PC-9 (cell line): ENCODE measurements at regions of chr5 and their contacts with region 1.

Region 1: DNA sequence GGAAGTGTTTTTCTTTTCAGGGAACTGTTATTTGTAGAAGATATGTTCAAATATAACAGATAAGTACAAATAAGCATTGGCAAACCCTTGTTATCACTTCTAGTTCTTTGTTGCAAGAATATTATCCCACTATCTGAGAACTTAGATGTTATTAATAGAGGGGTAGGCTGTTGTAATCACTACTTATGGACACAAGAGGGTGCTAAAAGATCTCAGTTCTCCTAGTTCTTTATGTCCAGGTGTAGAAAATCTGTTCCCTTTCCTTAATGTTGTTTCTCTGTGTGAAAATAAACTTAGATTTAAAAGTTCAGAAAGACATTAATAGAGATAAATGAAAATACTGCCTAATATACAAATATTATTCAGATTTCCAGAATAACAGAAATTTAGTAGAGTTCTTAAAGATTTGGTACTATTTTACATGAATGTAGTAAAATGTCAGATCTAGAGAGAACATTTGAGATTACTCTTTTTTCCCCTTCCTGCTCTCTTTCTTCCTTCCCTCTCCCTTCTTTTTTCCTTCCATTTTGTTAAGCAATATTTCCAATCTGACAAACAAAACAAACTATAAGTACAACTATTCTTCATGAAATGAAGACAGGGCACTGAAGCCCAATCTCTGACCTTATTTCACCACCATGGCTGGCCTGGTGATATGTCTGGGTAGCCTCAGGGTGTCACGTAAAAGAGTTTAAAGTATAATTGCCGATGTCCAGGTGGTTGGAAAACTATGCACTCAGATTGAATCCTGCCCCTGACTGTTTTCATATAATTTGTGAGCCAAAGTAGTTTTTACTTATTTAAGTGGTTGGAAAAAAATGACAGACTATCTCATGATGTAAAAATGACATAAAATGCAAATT is 43.6 kb upstream of the C5orf46 start:
- DNase-seq: peak in 1 of 2 experiments; percentile 42
- H3K4me3 ChIP-seq: no peak overlapping the region
- H3K27ac ChIP-seq: no peak overlapping the region
- H3K4me1 ChIP-seq: no peaks in the 10 kb centered on the region
- H3K27me3 ChIP-seq: no peaks in the 10 kb centered on the region
- CTCF ChIP-seq: peak; percentile 83

Region 2: GRCh38 chr5:148011401-148012132 is 61.6 kb after region 1 on chr5:
- CTCF ChIA-PET with region 1: no interaction called
- POLR2A ChIA-PET with region 1: no interaction called
- intact Hi-C with region 1: loop called (anchors 5 kb)
- DNase-seq: peak; percentile 71 to 94
- H3K4me3 ChIP-seq: no peak overlapping the region
- H3K27ac ChIP-seq: no peak overlapping the region
- H3K4me1 ChIP-seq: peaks cover 27% of the 10 kb centered on the region
- H3K27me3 ChIP-seq: peaks cover 17% of the 10 kb centered on the region; the same call in 1 of the 2 replicates
- CTCF ChIP-seq: no peak

Region 3: GRCh38 chr5:148033146-148033545 is 83.2 kb after region 1 on chr5:
- CTCF ChIA-PET with region 1: no interaction called
- POLR2A ChIA-PET with region 1: no interaction called
- intact Hi-C with region 1: no loop called
- DNase-seq: no peak
- H3K4me3 ChIP-seq: no peak overlapping the region
- H3K27ac ChIP-seq: no peak overlapping the region
- H3K4me1 ChIP-seq: no peaks in the 10 kb centered on the region
- H3K27me3 ChIP-seq: no peaks in the 10 kb centered on the region
- CTCF ChIP-seq: no peak

Region 4: GRCh38 chr5:148107608-148108007 is 157.7 kb after region 1 on chr5:
- CTCF ChIA-PET with region 1: no interaction called
- POLR2A ChIA-PET with region 1: no interaction called
- intact Hi-C with region 1: loop called (anchors 1 kb)
- DNase-seq: no peak
- H3K4me3 ChIP-seq: no peak overlapping the region
- H3K27ac ChIP-seq: no peak overlapping the region
- H3K4me1 ChIP-seq: no peaks in the 10 kb centered on the region
- H3K27me3 ChIP-seq: no peaks in the 10 kb centered on the region
- CTCF ChIP-seq: peak; percentile 41

Region 5: DNA sequence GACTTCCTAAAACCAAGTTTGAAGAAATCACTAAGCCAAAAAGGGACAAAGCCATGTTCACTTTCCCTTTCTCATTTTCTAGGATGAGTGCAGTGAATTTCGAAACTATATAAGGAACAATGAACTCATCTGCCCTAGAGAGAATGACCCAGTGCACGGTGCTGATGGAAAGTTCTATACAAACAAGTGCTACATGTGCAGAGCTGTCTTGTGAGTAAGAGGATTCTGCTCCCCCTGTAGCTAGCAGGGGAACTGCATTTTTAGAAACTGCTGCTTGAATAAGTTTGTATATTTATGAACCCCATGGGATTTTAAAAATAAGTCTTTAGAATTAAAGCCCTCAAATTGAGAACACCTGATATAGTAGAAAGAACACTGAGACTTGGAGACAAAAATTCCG is 175.7 kb after region 1 on chr5:
- CTCF ChIA-PET with region 1: no interaction called
- POLR2A ChIA-PET with region 1: no interaction called
- intact Hi-C with region 1: loop called (anchors 1 kb)
- DNase-seq: no peak
- H3K4me3 ChIP-seq: no peak overlapping the region
- H3K27ac ChIP-seq: no peak overlapping the region
- H3K4me1 ChIP-seq: no peaks in the 10 kb centered on the region
- H3K27me3 ChIP-seq: no peaks in the 10 kb centered on the region
- CTCF ChIP-seq: no peak; the same call in 1 of the 2 replicates

Region 6: GRCh38 chr5:148179234-148179824 is 229.4 kb after region 1 on chr5:
- CTCF ChIA-PET with region 1: interaction called, 3 read pairs
- POLR2A ChIA-PET with region 1: no interaction called
- intact Hi-C with region 1: loop called (anchors 2 kb)
- DNase-seq: peak; percentile 6 to 63
- H3K4me3 ChIP-seq: no peak overlapping the region
- H3K27ac ChIP-seq: no peak overlapping the region
- H3K4me1 ChIP-seq: no peaks in the 10 kb centered on the region
- H3K27me3 ChIP-seq: no peaks in the 10 kb centered on the region
- CTCF ChIP-seq: peak; percentile 84

Region 7: DNA sequence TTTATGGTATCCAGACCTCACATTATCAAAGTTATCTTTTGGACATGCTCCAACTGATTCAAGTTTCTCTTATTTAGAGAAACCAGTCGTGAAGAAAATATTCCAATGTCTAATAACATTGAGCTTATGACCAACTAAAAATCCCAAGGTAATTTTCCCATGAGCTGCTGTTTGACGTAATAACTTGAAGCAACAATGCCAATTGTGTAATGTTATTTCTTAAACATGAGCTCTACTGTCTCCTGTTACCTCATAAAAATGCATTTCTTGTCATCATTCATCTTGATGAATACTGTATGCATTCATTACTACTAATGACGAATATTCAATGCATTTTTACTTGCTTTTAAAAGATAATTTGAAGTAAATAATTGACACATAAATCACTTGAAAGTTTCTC is 287.8 kb after region 1 on chr5:
- CTCF ChIA-PET with region 1: no interaction called
- POLR2A ChIA-PET with region 1: no interaction called
- intact Hi-C with region 1: no loop called
- DNase-seq: no peak
- H3K4me3 ChIP-seq: no peak overlapping the region
- H3K27ac ChIP-seq: no peak overlapping the region
- H3K4me1 ChIP-seq: no peaks in the 10 kb centered on the region
- H3K27me3 ChIP-seq: no peaks in the 10 kb centered on the region
- CTCF ChIP-seq: no peak

Region 8: GRCh38 chr5:148353634-148354033 is 403.7 kb after region 1 on chr5:
- CTCF ChIA-PET with region 1: no interaction called
- POLR2A ChIA-PET with region 1: no interaction called
- intact Hi-C with region 1: loop called (anchors 10 kb)
- DNase-seq: no peak
- H3K4me3 ChIP-seq: no peak overlapping the region
- H3K27ac ChIP-seq: no peak overlapping the region
- H3K4me1 ChIP-seq: no peaks in the 10 kb centered on the region
- H3K27me3 ChIP-seq: no peaks in the 10 kb centered on the region
- CTCF ChIP-seq: peak; percentile 49